Stomach (tissue), 19 donors: ENCODE measurements at regions of chr7 and their contacts with region 1.

Region 1: GRCh38 chr7:2354186-2354938 is at the start of gene EIF3B:
- DNase-seq: peak; percentile 90 to 97
- H3K4me3 ChIP-seq: peak within 1 kb of the TSS; percentile 88 to 100 (median 100)
- H3K27ac ChIP-seq: peak within 1 kb of the TSS; percentile 94 to 100 (median 97)
- H3K4me1 ChIP-seq: peaks cover 33 to 54% (median 49%) of the 10 kb centered on the region in 4 donors
- H3K27me3 ChIP-seq: no peaks in the 10 kb centered on the region
- CTCF ChIP-seq: peak in 1 of 7 experiments; percentile 24
- EP300 ChIP-seq: no peak
- POLR2A ChIP-seq: no peak
- total RNA-seq, gene EIF3B: 115 to 373 (median 150) TPM

Region 2: GRCh38 chr7:2241580-2242540 is 112.5 kb before region 1 on chr7 and contains the starts of genes MRM2 and NUDT1:
- intact Hi-C with region 1: loop called (anchors 10 kb)
- DNase-seq: peak; percentile 90 to 95
- H3K4me3 ChIP-seq: peak within 1 kb of the TSS; percentile 69 to 100 (median 98)
- H3K27ac ChIP-seq: peak within 1 kb of the TSS; percentile 65 to 91 (median 78)
- H3K4me1 ChIP-seq: peaks cover 18 to 37% (median 27%) of the 10 kb centered on the region in 4 donors
- H3K27me3 ChIP-seq: no peaks in the 10 kb centered on the region
- CTCF ChIP-seq: no peak
- EP300 ChIP-seq: no peak
- POLR2A ChIP-seq: no peak
- total RNA-seq, gene MRM2: 9.9 to 19.1 (median 17.1) TPM
- total RNA-seq, gene NUDT1: 4.6 to 8.1 (median 6.2) TPM in 3 of 5 donors, not detected in the others